HCT116 (cell line): ENCODE measurements at regions of chr1 and their contacts with region 1.

Region 1: GRCh38 chr1:227563324-227564201 is at the start of gene ZNF678:
- DNase-seq: peak; percentile 94
- ATAC-seq: peak; percentile 97
- H3K4me3 ChIP-seq: peak within 1 kb of the TSS; percentile 61 to 76
- H3K27ac ChIP-seq: peak within 1 kb of the TSS; percentile 61
- H3K4me1 ChIP-seq: peaks cover 0 to 12% of the 10 kb centered on the region in 2 experiments; a peak in 2 of 4 replicates
- H3K27me3 ChIP-seq: no peaks in the 10 kb centered on the region
- CTCF ChIP-seq: no peak
- POLR2A ChIP-seq: peak; percentile 70
- RAD21 ChIP-seq: no peak
- total RNA-seq, gene ZNF678: 6.1 TPM

Region 2: GRCh38 chr1:227542143-227543120 is 21.1 kb before region 1 on chr1:
- CTCF ChIA-PET with region 1: interaction called, 6 read pairs
- POLR2A ChIA-PET with region 1: no interaction called
- RAD21 ChIA-PET with region 1: no interaction called
- intact Hi-C with region 1: loop called (anchors 1 kb)
- DNase-seq: peak; percentile 41
- ATAC-seq: peak; percentile 97
- H3K4me3 ChIP-seq: peak overlapping the region; percentile 13 to 29; a peak in 2 of 4 replicates
- H3K27ac ChIP-seq: peak overlapping the region; percentile 17; the same call in 1 of the 2 replicates
- H3K4me1 ChIP-seq: peaks cover 0 to 11% of the 10 kb centered on the region in 2 experiments; a peak in 3 of 4 replicates
- H3K27me3 ChIP-seq: no peaks in the 10 kb centered on the region
- CTCF ChIP-seq: peak; percentile 69 to 83 (median 80)
- POLR2A ChIP-seq: no peak
- RAD21 ChIP-seq: peak; percentile 44

Region 3: GRCh38 chr1:227728059-227728891 is 164.7 kb after region 1 on chr1:
- CTCF ChIA-PET with region 1: no interaction called
- POLR2A ChIA-PET with region 1: interaction called, 3 read pairs
- RAD21 ChIA-PET with region 1: no interaction called
- intact Hi-C with region 1: loop called (anchors 5 kb)
- DNase-seq: peak; percentile 57
- ATAC-seq: peak; percentile 78
- H3K4me3 ChIP-seq: peak overlapping the region; percentile 47 to 56
- H3K27ac ChIP-seq: peak overlapping the region; percentile 38
- H3K4me1 ChIP-seq: peaks cover 8 to 33% of the 10 kb centered on the region in 2 experiments
- H3K27me3 ChIP-seq: no peaks in the 10 kb centered on the region
- CTCF ChIP-seq: no peak
- POLR2A ChIP-seq: no peak
- RAD21 ChIP-seq: no peak